HepG2 (cell line): ENCODE measurements at regions of chr14 and their contacts with region 1.

Region 1: GRCh38 chr14:81565441-81566290 is 32.0 kb upstream of the SEL1L start:
- DNase-seq: peak; percentile 24
- ATAC-seq: peak; percentile 79
- H3K4me3 ChIP-seq: no peak overlapping the region
- H3K27ac ChIP-seq: no peak overlapping the region
- H3K4me1 ChIP-seq: no peaks in the 10 kb centered on the region
- H3K27me3 ChIP-seq: peaks cover 0 to 6% of the 10 kb centered on the region in 2 experiments; a peak in 1 of 5 replicates
- CTCF ChIP-seq: peak; percentile 75
- EP300 ChIP-seq: no peak
- POLR2A ChIP-seq: no peak
- RAD21 ChIP-seq: peak; percentile 29; the same call in 1 of the 2 replicates

Region 2: DNA sequence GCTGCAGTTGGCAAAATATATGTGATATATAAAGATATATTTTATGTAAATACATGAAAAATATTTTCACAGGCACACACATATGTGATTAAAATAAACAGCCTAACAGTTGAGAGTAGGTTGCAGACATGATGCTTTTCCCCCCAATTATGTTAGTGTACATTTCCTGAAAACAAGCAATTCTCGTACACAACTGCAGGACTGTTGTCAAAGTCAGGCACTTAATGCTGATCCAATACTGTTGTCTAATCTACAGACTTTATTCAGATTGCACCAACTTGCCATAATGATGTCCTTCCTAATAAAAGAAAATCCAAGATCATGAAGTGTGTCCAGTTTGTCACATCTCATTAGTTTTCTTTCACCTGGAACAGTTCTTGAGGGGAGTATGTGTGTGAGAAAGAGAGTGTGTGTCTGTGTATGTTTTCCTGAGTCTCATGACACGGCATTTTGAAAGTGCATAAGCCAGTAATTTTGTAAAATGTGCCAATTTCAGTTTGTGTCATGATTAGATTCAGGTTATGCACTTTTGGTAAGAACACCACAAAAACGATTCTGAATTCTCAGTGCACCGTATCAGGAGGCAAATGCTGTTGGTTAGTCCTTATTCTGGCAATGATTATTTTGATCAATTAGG is 15.5 kb before region 1 on chr14:
- CTCF ChIA-PET with region 1: no interaction called
- POLR2A ChIA-PET with region 1: no interaction called
- in situ Hi-C with region 1: no loop called
- intact Hi-C with region 1: no loop called
- DNase-seq: no peak
- ATAC-seq: no peak
- H3K4me3 ChIP-seq: no peak overlapping the region
- H3K27ac ChIP-seq: no peak overlapping the region
- H3K4me1 ChIP-seq: no peaks in the 10 kb centered on the region
- H3K27me3 ChIP-seq: no peaks in the 10 kb centered on the region
- CTCF ChIP-seq: no peak
- EP300 ChIP-seq: no peak
- POLR2A ChIP-seq: no peak
- RAD21 ChIP-seq: no peak

Region 3: GRCh38 chr14:81605660-81606059 is 40.0 kb after region 1 on chr14:
- CTCF ChIA-PET with region 1: no interaction called
- POLR2A ChIA-PET with region 1: no interaction called
- in situ Hi-C with region 1: no loop called
- intact Hi-C with region 1: no loop called
- DNase-seq: no peak
- ATAC-seq: no peak
- H3K4me3 ChIP-seq: no peak overlapping the region
- H3K27ac ChIP-seq: no peak overlapping the region
- H3K4me1 ChIP-seq: peaks cover 3% of the 10 kb centered on the region
- H3K27me3 ChIP-seq: no peaks in the 10 kb centered on the region
- CTCF ChIP-seq: no peak
- EP300 ChIP-seq: no peak
- POLR2A ChIP-seq: no peak
- RAD21 ChIP-seq: no peak

Region 4: GRCh38 chr14:81710234-81710845 is 144.7 kb after region 1 on chr14:
- CTCF ChIA-PET with region 1: no interaction called
- POLR2A ChIA-PET with region 1: no interaction called
- in situ Hi-C with region 1: no loop called
- intact Hi-C with region 1: loop called (anchors 10 kb)
- DNase-seq: peak; percentile 42
- ATAC-seq: peak; percentile 58; the same call in 1 of the 3 replicates
- H3K4me3 ChIP-seq: no peak overlapping the region
- H3K27ac ChIP-seq: no peak overlapping the region
- H3K4me1 ChIP-seq: no peaks in the 10 kb centered on the region
- H3K27me3 ChIP-seq: no peaks in the 10 kb centered on the region
- CTCF ChIP-seq: peak; percentile 76
- EP300 ChIP-seq: no peak
- POLR2A ChIP-seq: no peak
- RAD21 ChIP-seq: no peak